Adrenal gland (tissue), 19 donors: ENCODE measurements at regions of chr16 and their contacts with region 1.

Region 1: DNA sequence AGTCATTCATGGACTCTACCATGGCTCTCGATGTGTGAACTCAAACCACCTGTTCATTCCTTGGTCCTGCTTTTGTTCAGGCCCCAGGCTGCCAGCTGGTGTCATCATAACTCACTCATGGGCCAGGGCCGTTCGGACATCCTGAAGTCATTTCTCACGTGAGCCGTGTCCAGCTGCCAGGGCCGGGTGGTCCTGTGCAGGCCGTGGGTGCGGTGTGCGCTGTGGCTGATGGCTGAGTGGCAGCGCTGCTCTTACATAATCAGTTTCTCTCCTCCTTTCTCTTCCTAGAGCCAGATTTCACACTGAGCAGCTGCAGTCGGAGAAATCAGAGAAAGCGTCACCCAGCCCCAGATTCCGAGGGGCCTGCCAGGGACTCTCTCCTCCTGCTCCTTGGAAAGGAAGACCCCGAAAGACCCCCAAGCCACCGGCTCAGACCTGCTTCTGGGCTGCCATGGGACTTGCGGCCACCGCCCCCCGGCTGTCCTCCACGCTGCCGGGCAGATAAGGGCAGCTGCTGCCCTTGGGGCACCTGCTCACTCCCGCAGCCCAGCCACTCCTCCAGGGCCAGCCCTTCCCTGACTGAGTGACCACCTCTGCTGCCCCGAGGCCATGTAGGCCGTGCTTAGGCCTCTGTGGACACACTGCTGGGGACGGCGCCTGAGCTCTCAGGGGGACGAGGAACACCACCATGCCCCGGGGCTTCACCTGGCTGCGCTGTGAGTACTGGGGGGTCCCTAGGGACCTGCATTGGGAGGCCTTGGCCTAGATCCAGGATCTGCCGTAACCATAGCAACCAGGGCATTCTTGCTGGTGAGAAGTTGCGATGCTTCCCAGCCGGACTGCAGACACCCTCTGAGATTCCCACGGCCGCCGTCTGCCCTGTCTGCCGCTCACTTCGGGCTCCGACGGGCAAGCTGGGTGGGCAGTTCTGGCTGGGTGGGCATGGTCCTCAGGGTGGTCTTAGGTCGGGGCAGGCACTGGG is at the start of gene IL34:
- DNase-seq: peak; percentile 44 to 80 (median 66)
- H3K4me3 ChIP-seq: peak within 1 kb of the TSS in 1 of 4 donors; percentile 12
- H3K27ac ChIP-seq: peak within 1 kb of the TSS in 4 of 5 donors; percentile 11 to 83 (median 50)
- H3K4me1 ChIP-seq: peaks cover 0 to 15% of the 10 kb centered on the region in 2 donors
- H3K27me3 ChIP-seq: no peaks in the 10 kb centered on the region
- CTCF ChIP-seq: no peak
- POLR2A ChIP-seq: no peak
- total RNA-seq, gene IL34: 1.2 to 62.9 (median 38.1) TPM

Region 2: DNA sequence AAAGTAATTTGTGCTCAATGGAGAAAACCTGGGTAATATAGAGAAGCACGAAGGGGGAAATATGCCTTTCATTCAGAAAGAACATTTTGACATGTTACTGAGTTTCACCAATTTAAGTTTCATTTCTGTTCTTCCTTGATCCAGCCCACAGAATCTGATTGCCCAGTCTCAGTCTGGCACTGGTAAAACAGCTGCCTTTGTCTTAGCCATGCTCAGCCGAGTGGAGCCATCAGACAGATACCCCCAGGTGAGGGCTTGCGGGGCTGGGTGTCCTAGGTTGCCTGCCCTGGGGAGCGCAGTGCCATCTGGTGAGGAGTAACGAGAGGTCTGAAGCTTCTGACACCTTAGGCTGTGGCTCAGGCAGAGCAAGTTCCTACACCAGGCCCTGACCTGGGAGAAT is 282.2 kb before region 1 on chr16:
- intact Hi-C with region 1: loop called (anchors 5 to 10 kb)
- DNase-seq: no peak
- H3K4me3 ChIP-seq: no peak overlapping the region
- H3K27ac ChIP-seq: no peak overlapping the region
- H3K4me1 ChIP-seq: no peaks in the 10 kb centered on the region
- H3K27me3 ChIP-seq: no peaks in the 10 kb centered on the region
- CTCF ChIP-seq: no peak
- POLR2A ChIP-seq: no peak